ENCODE measurements at regions of chr6 and their contacts with region 1.

Region 1: DNA sequence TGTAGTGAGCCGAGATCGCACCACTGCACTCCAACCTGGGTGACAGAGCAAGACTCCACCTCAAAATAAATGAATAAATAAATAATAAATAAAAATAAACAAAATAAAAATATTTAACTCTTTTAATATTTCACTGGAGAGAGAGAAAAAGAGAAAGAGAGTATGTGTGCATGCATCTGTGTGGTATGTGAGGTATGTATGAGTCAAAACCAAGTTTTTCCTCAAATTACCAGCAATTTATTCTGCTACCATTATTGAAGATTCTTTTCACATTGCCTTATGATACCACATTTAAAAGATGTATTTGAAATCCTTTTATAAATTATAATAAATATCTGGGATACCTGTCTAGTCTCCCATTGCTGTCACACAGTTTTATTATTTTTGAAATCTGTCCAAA is 122.1 kb downstream of the CD164 start:
- DNase-seq: no peak
- H3K4me3 ChIP-seq: no peak overlapping the region
- H3K4me3 Mint-ChIP-seq: no peak overlapping the region
- H3K27ac ChIP-seq: no peak overlapping the region
- H3K27ac Mint-ChIP-seq: no peak overlapping the region
- H3K4me1 ChIP-seq: no peaks in the 10 kb centered on the region
- H3K4me1 Mint-ChIP-seq: peaks cover 7% of the 10 kb centered on the region
- H3K27me3 ChIP-seq: no peaks in the 10 kb centered on the region
- H3K27me3 Mint-ChIP-seq: peaks cover 0 to 2% (median 0%) of the 10 kb centered on the region in 3 donors
- CTCF ChIP-seq: no peak

Region 2: DNA sequence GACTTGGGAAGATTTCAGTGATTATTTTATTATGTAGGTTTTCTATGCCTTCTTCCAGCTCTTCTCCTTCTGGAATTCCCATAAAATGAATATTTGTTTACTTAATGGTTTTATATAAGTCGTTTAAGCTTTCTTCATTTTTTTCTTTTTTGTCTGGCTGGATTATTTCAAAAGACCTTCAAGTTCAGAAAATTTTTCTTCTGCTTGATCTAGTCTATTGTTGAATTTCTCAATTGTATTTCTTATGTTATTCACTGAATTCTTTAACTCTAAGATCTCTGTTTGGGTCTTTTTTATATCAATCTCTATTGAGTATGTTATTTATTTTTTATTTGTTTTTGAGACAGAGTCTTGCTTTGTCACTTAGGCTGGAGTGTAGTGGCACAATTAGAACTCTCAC is 47.4 kb before region 1 on chr6:
- intact Hi-C with region 1: loop called in 1 of 2 experiments (anchors 10 kb)
- DNase-seq: no peak
- H3K4me3 ChIP-seq: no peak overlapping the region
- H3K4me3 Mint-ChIP-seq: no peak overlapping the region
- H3K27ac ChIP-seq: no peak overlapping the region
- H3K27ac Mint-ChIP-seq: no peak overlapping the region
- H3K4me1 ChIP-seq: peaks cover under 1% of the 10 kb centered on the region in 2 donors
- H3K4me1 Mint-ChIP-seq: peaks cover 8% of the 10 kb centered on the region
- H3K27me3 ChIP-seq: no peaks in the 10 kb centered on the region
- H3K27me3 Mint-ChIP-seq: no peaks in the 10 kb centered on the region
- CTCF ChIP-seq: no peak

Measured in CD14-positive monocyte (primary cell).